ENCODE measurements at regions of chr9 and their contacts with region 1.

Region 1: DNA sequence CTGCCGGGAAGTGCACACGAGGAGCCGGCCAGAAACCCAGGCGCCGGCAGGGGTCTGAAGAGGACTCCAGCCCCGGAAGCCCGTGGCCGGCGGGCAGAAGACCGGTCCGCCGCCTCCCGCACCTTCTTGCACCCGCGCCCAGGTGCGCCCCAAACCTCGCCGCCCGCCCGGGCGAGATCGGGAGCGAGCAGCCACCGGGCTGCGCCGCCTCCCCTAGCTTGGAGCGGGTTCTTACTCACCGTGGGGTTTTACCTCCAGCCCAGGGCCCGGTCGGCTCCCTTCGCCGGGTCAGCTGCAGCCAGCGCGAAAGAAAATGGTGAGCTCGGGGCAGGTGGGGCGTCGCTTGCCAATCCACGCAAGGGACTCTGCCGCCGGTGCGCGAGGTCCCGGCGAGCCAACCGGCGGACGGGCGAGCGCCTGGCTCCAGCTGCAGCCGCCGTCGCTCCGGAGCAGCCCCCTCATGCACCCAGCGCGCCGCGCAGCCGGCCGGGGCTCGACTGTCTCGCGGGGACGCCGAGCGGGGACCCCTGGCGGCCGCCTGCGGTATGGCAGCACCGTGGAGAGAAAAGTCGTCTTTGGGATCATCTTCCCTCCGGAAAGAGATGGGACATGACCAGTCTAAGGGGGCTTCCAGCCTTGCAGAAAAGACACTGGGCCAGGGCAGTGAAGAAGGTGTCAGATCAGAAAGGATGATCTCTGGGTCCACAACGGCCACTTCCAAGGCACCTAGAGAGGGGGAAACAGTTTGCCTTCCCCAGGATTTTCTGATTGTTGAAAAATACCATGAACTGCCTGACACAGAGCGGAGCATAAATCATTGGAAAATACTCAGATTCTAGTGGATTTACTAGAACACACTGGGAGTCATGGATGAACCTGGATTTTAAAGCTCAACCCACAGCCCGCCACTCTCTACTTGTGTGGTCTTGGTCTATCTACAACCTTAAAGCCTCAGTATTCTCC is at the start of gene MOB3B:
- DNase-seq: peak; percentile 85 to 93
- ATAC-seq: peak; percentile 89 to 94 (median 92)
- H3K4me3 ChIP-seq: peak within 1 kb of the TSS; percentile 83
- H3K27ac ChIP-seq: peak within 1 kb of the TSS; percentile 77
- H3K4me1 ChIP-seq: no peaks in the 10 kb centered on the region
- H3K27me3 ChIP-seq: no peaks in the 10 kb centered on the region
- CTCF ChIP-seq: peak; percentile 97
- total RNA-seq, gene MOB3B: 1.1 to 4.5 (median 1.9) TPM

Region 2: GRCh38 chr9:27073841-27074728 is 455.5 kb before region 1 on chr9:
- intact Hi-C with region 1: no loop called
- DNase-seq: no peak
- ATAC-seq: no peak
- H3K4me3 ChIP-seq: no peak overlapping the region
- H3K27ac ChIP-seq: no peak overlapping the region
- H3K4me1 ChIP-seq: no peaks in the 10 kb centered on the region
- H3K27me3 ChIP-seq: no peaks in the 10 kb centered on the region
- CTCF ChIP-seq: no peak

Region 3: GRCh38 chr9:27377147-27377807 is 152.3 kb before region 1 on chr9:
- intact Hi-C with region 1: loop called in 1 of 2 experiments (anchors 5 kb)
- DNase-seq: no peak
- ATAC-seq: peak; percentile 93 to 95 (median 94)
- H3K4me3 ChIP-seq: peak overlapping the region; percentile 16
- H3K27ac ChIP-seq: peak overlapping the region; percentile 77
- H3K4me1 ChIP-seq: peaks cover 33% of the 10 kb centered on the region
- H3K27me3 ChIP-seq: no peaks in the 10 kb centered on the region
- CTCF ChIP-seq: no peak

Region 4: GRCh38 chr9:27427273-27427645 is 102.3 kb before region 1 on chr9:
- intact Hi-C with region 1: loop called in 1 of 2 experiments (anchors 5 kb)
- DNase-seq: no peak
- ATAC-seq: peak; percentile 64 to 87 (median 68)
- H3K4me3 ChIP-seq: no peak overlapping the region
- H3K27ac ChIP-seq: no peak overlapping the region
- H3K4me1 ChIP-seq: peaks cover 15% of the 10 kb centered on the region
- H3K27me3 ChIP-seq: no peaks in the 10 kb centered on the region
- CTCF ChIP-seq: no peak

Region 5: DNA sequence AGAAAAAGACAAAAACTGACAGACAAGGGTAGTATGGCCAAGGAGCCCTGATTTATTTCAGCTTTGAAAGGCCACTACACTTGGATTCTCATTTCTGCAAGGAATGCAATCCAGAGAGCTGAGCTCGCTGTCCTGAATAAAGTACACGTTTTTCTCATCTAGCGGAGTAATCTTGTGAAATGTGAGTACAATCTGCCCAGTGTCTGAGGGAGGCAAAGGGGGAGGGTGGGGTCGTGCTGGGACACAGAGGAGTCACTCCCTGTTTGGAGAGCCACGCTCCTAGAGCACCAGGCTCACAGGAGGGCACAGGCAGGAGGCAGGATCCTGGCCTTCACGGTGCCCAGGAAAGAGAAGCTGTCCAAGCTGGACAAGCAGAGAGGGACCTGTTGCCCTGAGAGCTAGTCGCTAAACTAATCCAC is 56.5 kb before region 1 on chr9:
- intact Hi-C with region 1: loop called in 1 of 2 experiments (anchors 5 kb)
- DNase-seq: peak; percentile 65 to 81
- ATAC-seq: peak; percentile 63 to 95 (median 83)
- H3K4me3 ChIP-seq: no peak overlapping the region
- H3K27ac ChIP-seq: no peak overlapping the region
- H3K4me1 ChIP-seq: peaks cover 22% of the 10 kb centered on the region
- H3K27me3 ChIP-seq: no peaks in the 10 kb centered on the region
- CTCF ChIP-seq: no peak

Region 6: DNA sequence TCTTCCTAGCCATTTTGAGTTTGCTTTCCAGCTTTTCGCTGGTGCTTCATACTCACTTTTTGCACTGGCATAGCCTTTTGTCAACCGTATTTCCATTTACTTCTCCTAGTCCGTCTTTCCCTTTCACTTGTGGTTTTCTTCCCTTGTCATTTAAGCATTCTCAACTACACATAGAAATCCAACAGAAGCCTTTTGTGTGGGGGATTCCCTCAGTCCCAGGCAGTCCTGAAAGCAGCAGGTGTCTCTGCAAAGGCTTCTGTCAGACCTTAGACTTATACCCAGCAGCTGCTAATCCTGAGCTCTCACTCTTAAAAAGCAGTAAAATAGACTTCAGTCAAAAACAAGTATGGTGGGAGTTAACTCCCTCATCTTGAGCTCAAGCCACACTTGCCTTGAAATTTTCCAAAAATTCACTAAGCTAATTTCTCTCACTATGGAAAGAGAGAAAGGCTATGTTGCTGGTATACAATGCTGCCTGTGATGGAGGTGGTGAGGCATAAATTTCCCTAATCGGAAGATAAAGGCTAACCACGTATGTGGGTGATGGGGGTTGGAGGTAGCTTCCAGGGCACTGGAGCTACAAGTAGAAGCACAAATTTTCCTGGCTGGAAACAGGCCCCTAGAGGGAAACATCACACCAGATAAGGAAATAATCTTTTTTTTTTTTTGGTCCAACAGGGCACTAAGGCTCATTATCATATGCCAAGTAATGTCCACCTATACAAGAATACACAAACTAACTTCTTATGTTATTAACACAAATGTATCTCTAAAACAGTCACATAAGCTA is 40.3 kb before region 1 on chr9:
- intact Hi-C with region 1: loop called in 1 of 2 experiments (anchors 5 kb)
- DNase-seq: no peak
- ATAC-seq: no peak
- H3K4me3 ChIP-seq: no peak overlapping the region
- H3K27ac ChIP-seq: no peak overlapping the region
- H3K4me1 ChIP-seq: no peaks in the 10 kb centered on the region
- H3K27me3 ChIP-seq: no peaks in the 10 kb centered on the region
- CTCF ChIP-seq: no peak

Region 7: DNA sequence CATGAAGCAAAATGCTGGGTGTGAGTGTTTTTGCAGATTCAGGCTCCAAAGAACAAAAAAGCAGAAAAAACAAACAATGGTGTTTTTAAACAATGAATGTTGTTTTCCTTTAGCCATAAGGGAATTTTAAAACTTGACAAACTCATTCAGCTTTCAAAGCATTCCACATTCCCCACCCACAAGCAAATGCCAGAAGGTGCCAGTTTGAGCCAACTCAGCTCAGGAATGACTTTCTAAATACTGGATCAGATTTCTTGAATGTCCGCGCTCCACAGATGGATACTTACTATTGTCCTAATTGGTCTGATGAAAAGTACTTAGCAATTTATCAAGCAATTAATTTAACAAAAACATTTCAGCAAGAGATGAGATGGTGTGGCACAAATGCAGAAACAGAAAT is 12.9 kb after region 1 on chr9:
- intact Hi-C with region 1: loop called in 1 of 2 experiments (anchors 2 kb)
- DNase-seq: no peak
- ATAC-seq: no peak
- H3K4me3 ChIP-seq: no peak overlapping the region
- H3K27ac ChIP-seq: peak overlapping the region; percentile 92
- H3K4me1 ChIP-seq: peaks cover 73% of the 10 kb centered on the region
- H3K27me3 ChIP-seq: no peaks in the 10 kb centered on the region
- CTCF ChIP-seq: no peak